MCF 10A (cell line): ENCODE measurements at regions of chr2 and their contacts with region 1.

Region 1: GRCh38 chr2:84077492-84077891 is 381.6 kb downstream of the SUCLG1 start:
- DNase-seq: peak; percentile 67
- H3K4me3 Mint-ChIP-seq: no peak overlapping the region
- H3K27ac Mint-ChIP-seq: no peak overlapping the region
- H3K4me1 Mint-ChIP-seq: no peaks in the 10 kb centered on the region
- H3K27me3 Mint-ChIP-seq: no peaks in the 10 kb centered on the region
- CTCF ChIP-seq: peak; percentile 63

Region 2: DNA sequence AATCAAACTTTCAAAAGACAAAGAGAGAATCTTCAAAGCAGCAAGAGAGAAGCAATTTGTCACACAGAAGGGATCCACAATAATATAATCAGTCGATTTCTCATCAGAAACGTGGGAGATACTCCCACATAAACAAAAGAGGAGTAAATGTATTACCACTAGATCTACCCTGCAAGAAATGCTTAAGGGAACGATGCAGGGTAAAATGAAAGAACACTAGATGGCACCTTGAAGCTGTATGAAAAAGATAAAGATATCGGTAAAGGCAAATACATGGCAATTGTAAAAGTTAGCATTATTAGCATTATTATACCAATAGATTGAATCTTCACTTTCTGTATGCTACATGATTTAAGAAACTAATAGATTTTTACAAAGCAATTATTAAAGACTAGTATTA is 295.4 kb before region 1 on chr2:
- CTCF ChIA-PET with region 1: interaction called, 5 read pairs
- POLR2A ChIA-PET with region 1: no interaction called
- intact Hi-C with region 1: loop called (anchors 1 kb)
- DNase-seq: peak; percentile 13
- H3K4me3 Mint-ChIP-seq: no peak overlapping the region
- H3K27ac Mint-ChIP-seq: peak overlapping the region; percentile 6
- H3K4me1 Mint-ChIP-seq: no peaks in the 10 kb centered on the region
- H3K27me3 Mint-ChIP-seq: no peaks in the 10 kb centered on the region
- CTCF ChIP-seq: no peak

Region 3: GRCh38 chr2:83827618-83828017 is 249.9 kb before region 1 on chr2:
- CTCF ChIA-PET with region 1: interaction called, 8 read pairs
- POLR2A ChIA-PET with region 1: no interaction called
- intact Hi-C with region 1: loop called (anchors 1 kb)
- DNase-seq: peak; percentile 11
- H3K4me3 Mint-ChIP-seq: no peak overlapping the region
- H3K27ac Mint-ChIP-seq: no peak overlapping the region
- H3K4me1 Mint-ChIP-seq: no peaks in the 10 kb centered on the region
- H3K27me3 Mint-ChIP-seq: no peaks in the 10 kb centered on the region
- CTCF ChIP-seq: peak; percentile 19

Region 4: GRCh38 chr2:84177733-84178132 is 100.2 kb after region 1 on chr2:
- CTCF ChIA-PET with region 1: no interaction called
- POLR2A ChIA-PET with region 1: no interaction called
- intact Hi-C with region 1: no loop called
- DNase-seq: no peak
- H3K4me3 Mint-ChIP-seq: no peak overlapping the region
- H3K27ac Mint-ChIP-seq: no peak overlapping the region
- H3K4me1 Mint-ChIP-seq: no peaks in the 10 kb centered on the region
- H3K27me3 Mint-ChIP-seq: no peaks in the 10 kb centered on the region
- CTCF ChIP-seq: no peak

Region 5: GRCh38 chr2:84257831-84258230 is 180.3 kb after region 1 on chr2:
- CTCF ChIA-PET with region 1: interaction called, 3 read pairs
- POLR2A ChIA-PET with region 1: no interaction called
- intact Hi-C with region 1: loop called (anchors 5 kb)
- DNase-seq: peak; percentile 46
- H3K4me3 Mint-ChIP-seq: no peak overlapping the region
- H3K27ac Mint-ChIP-seq: no peak overlapping the region
- H3K4me1 Mint-ChIP-seq: no peaks in the 10 kb centered on the region
- H3K27me3 Mint-ChIP-seq: no peaks in the 10 kb centered on the region
- CTCF ChIP-seq: peak; percentile 27